CD4-positive, alpha-beta T cell (primary cell): ENCODE measurements at regions of chr7 and their contacts with region 1.

Region 1: GRCh38 chr7:116173051-116174028 is 37.0 kb upstream of the TES start:
- DNase-seq: peak in 5 of 14 experiments; percentile 10 to 77 (median 72)
- ATAC-seq: peak; percentile 54
- H3K4me3 ChIP-seq: no peak overlapping the region
- H3K4me3 Mint-ChIP-seq: no peak overlapping the region
- H3K27ac ChIP-seq: no peak overlapping the region
- H3K27ac Mint-ChIP-seq: no peak overlapping the region
- H3K4me1 ChIP-seq: no peaks in the 10 kb centered on the region
- H3K4me1 Mint-ChIP-seq: no peaks in the 10 kb centered on the region
- H3K27me3 ChIP-seq: peaks cover 0 to 3% of the 10 kb centered on the region in 2 experiments
- H3K27me3 Mint-ChIP-seq: peaks cover 13% of the 10 kb centered on the region
- CTCF ChIP-seq: peak; percentile 85

Region 2: GRCh38 chr7:116525913-116526861 is 352.8 kb after region 1 on chr7:
- CTCF ChIA-PET with region 1: no interaction called
- POLR2A ChIA-PET with region 1: no interaction called
- intact Hi-C with region 1: loop called (anchors 2 to 5 kb)
- DNase-seq: peak; percentile 27 to 80 (median 50)
- ATAC-seq: peak; percentile 92
- H3K4me3 ChIP-seq: peak overlapping the region; percentile 52
- H3K4me3 Mint-ChIP-seq: peak overlapping the region; percentile 83
- H3K27ac ChIP-seq: no peak overlapping the region
- H3K27ac Mint-ChIP-seq: no peak overlapping the region
- H3K4me1 ChIP-seq: peaks cover 24% of the 10 kb centered on the region
- H3K4me1 Mint-ChIP-seq: peaks cover 20% of the 10 kb centered on the region
- H3K27me3 ChIP-seq: peaks cover 49 to 57% of the 10 kb centered on the region in 2 experiments
- H3K27me3 Mint-ChIP-seq: peaks cover 91% of the 10 kb centered on the region
- CTCF ChIP-seq: peak; percentile 61

Region 3: DNA sequence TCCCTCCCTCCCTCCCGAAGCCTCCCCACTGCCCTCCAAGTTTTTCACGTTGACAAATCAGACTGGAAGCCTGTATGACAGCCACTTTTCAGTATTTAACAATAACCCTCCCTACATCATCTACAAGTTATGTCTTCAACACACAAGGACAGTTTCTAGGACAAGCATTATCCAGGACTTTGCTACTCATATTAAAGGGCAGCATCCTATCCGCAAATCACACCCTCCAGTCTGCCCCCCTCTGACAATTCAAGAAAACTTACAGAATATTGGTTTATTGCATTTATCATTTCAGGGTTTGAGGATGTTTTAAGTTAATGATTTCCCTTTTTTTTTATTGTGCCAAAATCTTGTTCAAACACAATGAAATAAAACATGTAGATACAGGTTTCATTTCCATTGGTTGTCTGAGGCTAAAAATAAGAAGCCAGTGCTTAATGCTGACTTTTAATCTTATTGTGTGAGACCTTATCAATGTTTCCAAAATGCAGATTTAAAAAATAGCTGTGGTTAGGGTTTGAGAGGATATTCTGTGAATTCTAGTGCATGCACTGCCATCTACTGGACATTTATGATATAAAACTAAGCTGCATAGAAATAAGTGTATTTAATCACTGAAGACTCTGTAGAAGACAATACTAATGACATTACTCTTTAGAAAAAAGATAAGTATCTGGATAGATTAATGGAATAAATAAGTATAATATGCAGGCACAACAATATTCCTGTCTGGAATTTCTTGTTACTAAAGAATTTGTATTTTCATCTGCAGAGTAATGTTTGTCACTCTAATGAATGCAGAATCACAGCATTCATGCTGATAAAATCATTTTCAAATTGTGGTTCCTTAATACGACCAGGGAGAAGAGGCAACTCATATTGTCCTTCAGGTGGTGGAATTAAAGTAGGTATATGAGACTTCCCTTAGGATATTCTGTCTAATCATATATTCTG is 415.6 kb after region 1 on chr7:
- CTCF ChIA-PET with region 1: interaction called, 4 read pairs
- POLR2A ChIA-PET with region 1: no interaction called
- intact Hi-C with region 1: loop called (anchors 1 kb)
- DNase-seq: peak in 3 of 14 experiments; percentile 46 to 61 (median 57)
- ATAC-seq: no peak
- H3K4me3 ChIP-seq: no peak overlapping the region
- H3K4me3 Mint-ChIP-seq: no peak overlapping the region
- H3K27ac ChIP-seq: no peak overlapping the region
- H3K27ac Mint-ChIP-seq: no peak overlapping the region
- H3K4me1 ChIP-seq: peaks cover 6% of the 10 kb centered on the region
- H3K4me1 Mint-ChIP-seq: peaks cover 22% of the 10 kb centered on the region
- H3K27me3 ChIP-seq: peaks cover 0 to 26% of the 10 kb centered on the region in 2 experiments
- H3K27me3 Mint-ChIP-seq: peaks cover 25% of the 10 kb centered on the region
- CTCF ChIP-seq: peak; percentile 95

Region 4: DNA sequence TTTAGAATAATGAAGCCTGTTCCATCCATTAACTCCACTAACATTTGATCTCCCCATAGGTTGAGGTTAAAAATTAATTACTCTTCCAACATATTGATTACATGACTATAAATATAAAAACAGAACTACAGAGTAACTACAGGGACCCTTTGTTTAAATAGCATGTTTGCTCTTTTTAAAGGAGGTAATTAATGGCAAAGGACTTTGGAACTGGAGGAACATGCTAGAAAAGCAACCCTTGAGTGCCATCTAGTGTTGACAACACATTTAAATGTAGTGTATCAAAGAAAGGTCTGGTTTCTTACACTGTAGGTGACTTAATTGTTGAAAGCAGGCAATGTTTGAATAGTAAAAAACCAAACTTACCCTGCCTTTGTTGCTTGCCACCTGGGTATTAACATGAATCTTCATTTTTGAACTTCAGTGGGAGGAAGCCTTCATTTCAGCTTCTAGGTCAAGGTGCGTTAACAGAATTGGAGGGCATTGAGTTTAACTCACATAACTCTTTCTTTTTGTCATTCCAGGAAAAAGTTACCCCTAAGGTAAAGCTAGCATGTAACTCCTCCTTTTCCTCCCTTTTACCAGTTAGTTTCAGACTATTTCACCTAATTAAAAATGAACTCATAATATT is 636.4 kb after region 1 on chr7:
- CTCF ChIA-PET with region 1: no interaction called
- POLR2A ChIA-PET with region 1: no interaction called
- intact Hi-C with region 1: loop called (anchors 1 kb)
- DNase-seq: peak in 4 of 14 experiments; percentile 7 to 62 (median 54)
- ATAC-seq: peak; percentile 48
- H3K4me3 ChIP-seq: no peak overlapping the region
- H3K4me3 Mint-ChIP-seq: no peak overlapping the region
- H3K27ac ChIP-seq: no peak overlapping the region
- H3K27ac Mint-ChIP-seq: no peak overlapping the region
- H3K4me1 ChIP-seq: no peaks in the 10 kb centered on the region
- H3K4me1 Mint-ChIP-seq: no peaks in the 10 kb centered on the region
- H3K27me3 ChIP-seq: no peaks in the 10 kb centered on the region
- H3K27me3 Mint-ChIP-seq: no peaks in the 10 kb centered on the region
- CTCF ChIP-seq: peak; percentile 69

Region 5: GRCh38 chr7:117127585-117128168 is 954.3 kb after region 1 on chr7:
- CTCF ChIA-PET with region 1: no interaction called
- POLR2A ChIA-PET with region 1: no interaction called
- intact Hi-C with region 1: loop called (anchors 5 kb)
- DNase-seq: peak in 13 of 14 experiments; percentile 15 to 74 (median 36)
- ATAC-seq: peak; percentile 68
- H3K4me3 ChIP-seq: no peak overlapping the region
- H3K4me3 Mint-ChIP-seq: no peak overlapping the region
- H3K27ac ChIP-seq: no peak overlapping the region
- H3K27ac Mint-ChIP-seq: no peak overlapping the region
- H3K4me1 ChIP-seq: no peaks in the 10 kb centered on the region
- H3K4me1 Mint-ChIP-seq: no peaks in the 10 kb centered on the region
- H3K27me3 ChIP-seq: no peaks in the 10 kb centered on the region
- H3K27me3 Mint-ChIP-seq: no peaks in the 10 kb centered on the region
- CTCF ChIP-seq: peak; percentile 92